ENCODE measurements at regions of chrX and their contacts with region 1.

Region 1: DNA sequence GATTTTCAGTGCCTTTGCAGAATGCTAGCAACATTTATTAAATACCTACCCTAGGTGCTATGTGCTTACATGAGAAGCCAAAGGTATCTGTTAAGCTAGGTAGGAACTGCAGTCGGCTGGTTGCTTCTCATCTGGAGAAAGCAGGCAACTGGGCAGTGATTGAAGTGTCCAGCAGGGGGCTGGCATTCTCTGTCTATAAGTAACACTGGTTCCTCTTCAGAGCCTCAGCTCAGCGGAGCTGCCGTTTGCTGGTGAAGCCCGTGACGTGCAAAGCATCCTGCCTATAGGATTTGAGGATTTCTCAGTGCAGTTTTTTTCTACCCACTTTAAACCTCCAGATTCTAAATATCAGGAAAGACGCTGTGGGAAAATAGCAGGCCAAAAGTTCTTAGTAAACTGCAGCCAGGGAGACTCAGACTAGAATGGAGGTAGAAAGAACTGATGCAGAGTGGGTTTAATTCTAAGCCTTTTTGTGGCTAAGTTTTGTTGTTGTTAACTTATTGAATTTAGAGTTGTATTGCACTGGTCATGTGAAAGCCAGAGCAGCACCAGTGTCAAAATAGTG is at the start of gene GRPR:
- DNase-seq: peak; percentile 69
- H3K4me3 Mint-ChIP-seq: no peak within 1 kb of the TSS
- H3K27ac Mint-ChIP-seq: no peak within 1 kb of the TSS
- H3K4me1 Mint-ChIP-seq: peaks cover 19% of the 10 kb centered on the region
- H3K27me3 Mint-ChIP-seq: peaks cover 4% of the 10 kb centered on the region
- total RNA-seq, gene GRPR: not detected

Region 2: DNA sequence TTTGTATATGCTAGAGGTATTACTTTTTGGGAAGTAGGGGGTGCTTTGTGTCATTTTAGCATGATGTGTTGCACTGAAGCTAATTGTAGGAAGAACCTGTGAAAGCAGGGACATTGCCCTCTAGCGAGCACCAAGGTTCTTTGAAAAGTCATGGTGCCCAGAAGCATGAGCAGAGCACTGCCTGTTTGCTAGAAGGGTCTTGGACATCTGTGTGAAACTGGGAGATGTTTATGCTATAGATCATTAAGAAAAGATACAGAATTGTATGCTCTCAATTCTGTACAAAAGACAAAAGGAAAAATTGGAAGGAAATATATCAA is 14.8 kb after region 1 on chrX:
- CTCF ChIA-PET with region 1: interaction called, 15 read pairs
- POLR2A ChIA-PET with region 1: no interaction called
- intact Hi-C with region 1: no loop called
- DNase-seq: no peak
- H3K4me3 Mint-ChIP-seq: no peak overlapping the region
- H3K27ac Mint-ChIP-seq: no peak overlapping the region
- H3K4me1 Mint-ChIP-seq: no peaks in the 10 kb centered on the region
- H3K27me3 Mint-ChIP-seq: peaks cover 2% of the 10 kb centered on the region

Region 3: DNA sequence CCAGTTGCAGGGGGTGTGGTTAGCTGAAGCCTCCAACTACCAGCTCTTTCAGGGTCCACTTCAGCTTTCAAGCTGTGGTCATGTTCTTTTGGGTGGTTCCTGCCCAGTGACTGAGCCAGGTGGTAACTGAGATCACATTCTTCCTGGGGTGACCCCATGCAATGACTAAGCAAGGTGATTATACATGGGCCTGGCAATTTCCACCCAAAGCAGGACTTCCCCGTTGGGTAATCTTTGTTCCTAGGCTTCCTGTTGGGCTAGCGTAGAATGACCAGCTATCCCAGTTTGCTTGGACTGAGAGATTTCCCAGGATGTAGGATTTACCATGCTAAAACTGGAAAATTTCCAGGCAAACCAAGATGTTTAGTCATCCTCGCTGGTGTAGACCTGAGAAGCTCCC is 25.6 kb after region 1 on chrX:
- CTCF ChIA-PET with region 1: no interaction called
- POLR2A ChIA-PET with region 1: no interaction called
- intact Hi-C with region 1: no loop called
- DNase-seq: no peak
- H3K4me3 Mint-ChIP-seq: no peak overlapping the region
- H3K27ac Mint-ChIP-seq: no peak overlapping the region
- H3K4me1 Mint-ChIP-seq: no peaks in the 10 kb centered on the region
- H3K27me3 Mint-ChIP-seq: no peaks in the 10 kb centered on the region

Region 4: DNA sequence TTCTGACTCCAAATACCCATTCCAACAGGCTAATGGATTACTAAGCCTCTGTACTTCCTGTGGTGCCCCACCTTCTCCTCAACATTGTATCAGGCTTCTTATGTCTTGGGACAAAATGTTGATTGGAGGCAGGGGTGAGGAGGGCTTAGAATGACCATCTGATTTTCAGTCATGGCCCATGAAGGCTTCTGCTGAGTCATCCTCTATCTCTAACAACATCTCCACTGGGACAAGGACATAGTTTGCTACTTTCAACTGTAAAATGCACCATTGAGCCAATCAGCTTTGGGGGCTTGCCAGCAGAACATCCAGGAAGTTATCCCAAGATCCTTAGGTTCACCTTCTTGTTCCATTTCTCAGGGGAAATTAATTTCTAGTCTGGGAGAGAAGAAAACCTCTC is 73.5 kb after region 1 on chrX:
- CTCF ChIA-PET with region 1: no interaction called
- POLR2A ChIA-PET with region 1: no interaction called
- intact Hi-C with region 1: no loop called
- DNase-seq: no peak
- H3K4me3 Mint-ChIP-seq: no peak overlapping the region
- H3K27ac Mint-ChIP-seq: no peak overlapping the region
- H3K4me1 Mint-ChIP-seq: no peaks in the 10 kb centered on the region
- H3K27me3 Mint-ChIP-seq: peaks cover 3% of the 10 kb centered on the region

Region 5: GRCh38 chrX:16394290-16394689 is 271.0 kb after region 1 on chrX:
- CTCF ChIA-PET with region 1: no interaction called
- POLR2A ChIA-PET with region 1: no interaction called
- intact Hi-C with region 1: no loop called
- DNase-seq: no peak
- H3K4me3 Mint-ChIP-seq: no peak overlapping the region
- H3K27ac Mint-ChIP-seq: no peak overlapping the region
- H3K4me1 Mint-ChIP-seq: no peaks in the 10 kb centered on the region
- H3K27me3 Mint-ChIP-seq: no peaks in the 10 kb centered on the region

Region 6: GRCh38 chrX:16670998-16671397 is 547.7 kb after region 1 on chrX:
- CTCF ChIA-PET with region 1: no interaction called
- POLR2A ChIA-PET with region 1: no interaction called
- intact Hi-C with region 1: loop called (anchors 10 kb)
- DNase-seq: peak; percentile 20
- H3K4me3 Mint-ChIP-seq: no peak overlapping the region
- H3K27ac Mint-ChIP-seq: no peak overlapping the region
- H3K4me1 Mint-ChIP-seq: no peaks in the 10 kb centered on the region
- H3K27me3 Mint-ChIP-seq: no peaks in the 10 kb centered on the region

Measured in activated CD4-positive, alpha-beta memory T cell treated with anti-CD3 and anti-CD28 coated beads for 36 hours (primary cell).